Activated CD4-positive, alpha-beta memory T cell treated with anti-CD3 and anti-CD28 coated beads for 36 hours (primary cell): ENCODE measurements at regions of chr6 and their contacts with region 1.

Region 1: DNA sequence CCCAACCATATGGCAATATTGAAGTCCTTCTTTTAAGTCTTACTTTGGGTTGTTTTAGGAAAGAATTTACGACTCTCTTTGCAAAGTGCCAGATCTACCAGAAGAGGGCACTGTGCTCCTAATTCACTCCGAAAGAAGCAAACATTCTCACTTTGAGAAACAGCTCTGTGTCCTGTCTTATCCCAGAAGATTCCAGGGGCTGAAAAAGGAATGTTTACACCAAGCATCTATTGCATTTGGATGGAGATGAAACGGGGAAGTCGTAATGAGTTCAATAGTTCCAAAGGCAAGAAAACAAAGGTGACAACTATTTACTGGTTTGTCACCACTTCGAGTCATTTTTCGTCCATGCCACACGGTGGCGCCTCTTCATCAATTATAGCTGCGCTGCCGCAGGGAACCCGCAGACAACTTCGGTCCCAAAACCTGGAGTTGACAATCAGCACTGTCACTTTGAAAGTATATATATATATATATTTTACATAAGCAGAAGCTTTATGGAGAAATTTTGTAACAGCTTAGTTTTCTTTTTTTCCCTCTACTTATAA is 121.6 kb downstream of the MOXD1 start:
- DNase-seq: peak; percentile 80
- H3K4me3 Mint-ChIP-seq: peak overlapping the region; percentile 73
- H3K27ac Mint-ChIP-seq: no peak overlapping the region
- H3K4me1 Mint-ChIP-seq: no peaks in the 10 kb centered on the region
- H3K27me3 Mint-ChIP-seq: peaks cover 19% of the 10 kb centered on the region

Region 2: GRCh38 chr6:131914967-131915751 is 364.5 kb before region 1 on chr6:
- CTCF ChIA-PET with region 1: interaction called, 14 read pairs
- POLR2A ChIA-PET with region 1: no interaction called
- intact Hi-C with region 1: loop called (anchors 5 kb)
- DNase-seq: peak; percentile 61
- H3K4me3 Mint-ChIP-seq: no peak overlapping the region
- H3K27ac Mint-ChIP-seq: no peak overlapping the region
- H3K4me1 Mint-ChIP-seq: peaks cover 13% of the 10 kb centered on the region
- H3K27me3 Mint-ChIP-seq: peaks cover 43% of the 10 kb centered on the region

Region 3: GRCh38 chr6:132289756-132290155 is 10.1 kb after region 1 on chr6:
- CTCF ChIA-PET with region 1: interaction called, 140 read pairs
- POLR2A ChIA-PET with region 1: no interaction called
- intact Hi-C with region 1: no loop called
- DNase-seq: no peak
- H3K4me3 Mint-ChIP-seq: no peak overlapping the region
- H3K27ac Mint-ChIP-seq: no peak overlapping the region
- H3K4me1 Mint-ChIP-seq: no peaks in the 10 kb centered on the region
- H3K27me3 Mint-ChIP-seq: peaks cover 6% of the 10 kb centered on the region

Region 4: DNA sequence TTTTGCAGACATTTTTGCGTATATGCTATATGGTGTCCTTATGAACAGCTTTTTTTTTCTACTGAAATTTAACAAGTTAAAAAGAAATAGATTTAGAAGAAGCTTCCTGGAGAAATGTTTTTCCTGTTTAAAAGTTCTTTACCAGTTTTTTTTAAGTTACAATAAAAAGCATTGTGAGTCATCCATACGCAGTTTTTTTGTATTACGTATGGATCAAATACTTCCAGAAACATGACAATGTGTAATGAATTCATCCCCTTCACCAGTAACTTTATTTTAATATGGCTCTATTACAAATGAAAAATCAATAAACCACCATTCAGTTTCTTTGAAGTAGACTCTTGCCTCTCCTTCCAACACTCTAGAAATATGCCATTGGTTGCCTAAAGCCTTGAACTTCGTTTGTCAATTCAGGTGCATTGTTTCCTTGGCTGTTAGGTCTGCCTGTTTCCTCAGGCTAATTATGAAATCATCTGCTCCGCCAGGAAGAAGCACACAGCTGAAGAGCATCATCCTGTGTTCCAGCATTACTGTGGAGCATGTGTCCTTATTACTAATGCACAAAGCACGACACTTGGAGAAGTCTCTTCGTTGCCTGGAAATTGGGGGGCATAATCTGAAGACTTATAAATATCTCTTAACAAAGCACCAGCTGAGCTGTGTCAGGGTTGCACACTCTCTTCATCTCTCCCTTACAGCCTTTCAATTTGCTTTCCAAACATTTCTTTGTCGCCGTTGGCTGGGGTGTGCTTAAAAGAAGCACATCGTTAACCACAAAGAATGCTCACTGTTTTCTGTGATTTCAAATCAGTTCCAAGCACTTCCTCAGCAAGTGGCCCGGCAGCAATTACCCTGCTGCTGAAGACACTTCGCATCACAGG is 112.0 kb after region 1 on chr6:
- CTCF ChIA-PET with region 1: interaction called, 23 read pairs
- POLR2A ChIA-PET with region 1: no interaction called
- intact Hi-C with region 1: loop called (anchors 2 kb)
- DNase-seq: no peak
- H3K4me3 Mint-ChIP-seq: no peak overlapping the region
- H3K27ac Mint-ChIP-seq: no peak overlapping the region
- H3K4me1 Mint-ChIP-seq: no peaks in the 10 kb centered on the region
- H3K27me3 Mint-ChIP-seq: peaks cover 24% of the 10 kb centered on the region

Region 5: DNA sequence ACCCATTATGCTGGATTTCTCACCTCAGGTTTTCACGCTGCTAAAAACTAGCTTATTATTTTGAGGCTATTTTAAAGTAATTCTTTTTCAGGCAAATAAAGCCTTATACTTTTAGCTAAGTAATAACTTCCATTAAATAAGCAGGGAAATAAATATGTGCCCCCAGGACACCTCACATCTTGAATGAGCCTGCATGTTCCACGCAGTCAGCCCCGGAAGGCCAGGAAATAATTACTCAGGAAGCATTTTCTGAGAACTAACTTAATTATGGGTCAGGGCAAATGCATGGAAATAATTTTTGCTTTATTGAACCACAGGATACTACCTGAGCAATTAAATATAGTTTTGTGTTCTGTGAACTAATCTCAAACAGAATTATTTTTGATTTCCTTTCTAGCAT is 192.1 kb after region 1 on chr6:
- CTCF ChIA-PET with region 1: interaction called, 25 read pairs
- POLR2A ChIA-PET with region 1: no interaction called
- intact Hi-C with region 1: no loop called
- DNase-seq: no peak
- H3K4me3 Mint-ChIP-seq: no peak overlapping the region
- H3K27ac Mint-ChIP-seq: no peak overlapping the region
- H3K4me1 Mint-ChIP-seq: no peaks in the 10 kb centered on the region
- H3K27me3 Mint-ChIP-seq: no peaks in the 10 kb centered on the region

Region 6: DNA sequence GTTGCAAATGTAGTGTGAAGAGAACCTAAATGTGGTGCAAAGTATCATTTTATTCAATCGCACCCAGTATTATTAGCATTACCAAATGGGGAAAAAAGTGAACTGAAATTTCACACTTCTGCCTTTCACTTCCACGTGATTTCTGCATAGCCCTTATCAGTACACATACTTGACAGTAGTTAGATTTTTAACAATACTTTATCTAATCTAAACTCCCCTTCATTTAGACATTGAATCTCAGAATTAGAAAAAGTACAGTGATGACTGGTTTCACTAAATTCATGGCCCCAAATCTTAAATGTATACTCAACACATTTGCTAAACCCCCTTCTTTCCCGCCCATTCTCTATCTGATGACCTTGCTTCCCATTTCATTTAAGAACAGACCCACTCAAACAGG is 219.0 kb after region 1 on chr6:
- CTCF ChIA-PET with region 1: interaction called, 42 read pairs
- POLR2A ChIA-PET with region 1: interaction called, 3 read pairs
- intact Hi-C with region 1: no loop called
- DNase-seq: no peak
- H3K4me3 Mint-ChIP-seq: no peak overlapping the region
- H3K27ac Mint-ChIP-seq: no peak overlapping the region
- H3K4me1 Mint-ChIP-seq: peaks cover 45% of the 10 kb centered on the region
- H3K27me3 Mint-ChIP-seq: no peaks in the 10 kb centered on the region